Heart left ventricle (tissue), 16 donors: ENCODE measurements at regions of chr5 and their contacts with region 1.

Region 1: DNA sequence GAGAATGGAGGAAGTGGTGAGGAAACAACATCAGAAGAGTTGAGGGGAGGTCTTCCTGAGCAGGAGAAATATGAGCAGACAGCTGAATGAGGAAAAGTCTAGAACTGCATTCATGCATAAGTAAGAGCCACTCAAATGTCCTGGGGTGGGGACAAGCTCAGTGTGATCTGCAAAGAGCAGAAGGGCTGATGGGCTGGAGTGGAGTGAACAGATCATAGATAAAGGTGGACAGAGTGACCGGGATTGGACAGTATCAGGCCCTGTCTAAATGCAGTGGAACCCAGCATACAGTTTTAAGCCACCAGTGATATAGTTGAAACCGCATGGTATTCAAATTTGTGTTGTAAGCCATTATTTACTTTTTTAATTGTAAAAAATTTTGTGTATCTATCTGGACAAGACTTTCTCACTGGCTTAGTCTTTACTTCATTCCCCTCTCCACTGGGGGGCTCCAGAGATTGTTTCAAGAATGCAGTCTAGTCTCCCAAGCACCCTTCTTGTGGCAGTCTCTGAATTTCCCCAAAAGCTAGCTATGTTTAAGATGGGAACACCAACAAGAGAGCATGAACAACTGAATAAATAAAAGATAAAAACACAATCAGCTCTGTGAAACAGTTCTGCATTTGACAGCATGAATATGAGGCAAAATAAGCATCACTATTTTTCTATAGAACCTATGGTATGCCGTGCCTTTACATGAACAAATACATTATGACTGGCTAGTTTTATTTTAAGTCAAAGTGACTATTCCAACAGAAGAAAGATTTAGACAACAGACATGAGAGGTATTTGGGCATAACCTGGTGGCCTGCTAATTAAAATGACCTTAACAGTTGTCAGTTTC is 10.7 kb upstream of the STK32A start:
- DNase-seq: peak in 1 of 5 donors; percentile 30
- ATAC-seq: peak; percentile 51 to 83 (median 70)
- H3K4me3 ChIP-seq: no peak overlapping the region
- H3K27ac ChIP-seq: no peak overlapping the region
- H3K4me1 ChIP-seq: no peaks in the 10 kb centered on the region
- H3K27me3 ChIP-seq: peaks cover 0 to 8% (median 0%) of the 10 kb centered on the region in 9 donors
- CTCF ChIP-seq: peak; percentile 28 to 83 (median 62)
- POLR2A ChIP-seq: no peak

Region 2: DNA sequence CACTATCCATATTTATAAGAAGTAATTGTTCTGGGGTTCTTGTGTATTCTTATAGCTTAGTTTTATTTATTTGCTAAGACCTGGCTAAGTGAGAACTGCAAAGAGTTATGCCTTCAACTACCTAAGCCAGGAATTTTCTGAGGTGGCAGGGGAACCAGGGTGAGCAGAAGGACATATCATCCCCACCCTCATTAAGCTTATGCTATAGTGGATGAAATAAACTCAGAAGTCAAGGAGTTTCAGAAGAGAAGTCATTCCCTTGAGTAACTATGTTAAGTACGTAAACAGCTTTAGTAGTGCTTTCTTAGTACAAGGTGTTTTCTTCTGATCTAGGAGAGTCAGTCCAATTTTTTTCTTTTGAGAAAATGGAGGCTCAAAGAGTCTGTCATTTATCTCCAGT is 52.3 kb after region 1 on chr5:
- intact Hi-C with region 1: no loop called
- DNase-seq: no peak
- ATAC-seq: no peak
- H3K4me3 ChIP-seq: no peak overlapping the region
- H3K27ac ChIP-seq: no peak overlapping the region
- H3K4me1 ChIP-seq: no peaks in the 10 kb centered on the region
- H3K27me3 ChIP-seq: peaks cover 0 to 8% (median 0%) of the 10 kb centered on the region in 9 donors
- CTCF ChIP-seq: no peak
- POLR2A ChIP-seq: no peak

Region 3: DNA sequence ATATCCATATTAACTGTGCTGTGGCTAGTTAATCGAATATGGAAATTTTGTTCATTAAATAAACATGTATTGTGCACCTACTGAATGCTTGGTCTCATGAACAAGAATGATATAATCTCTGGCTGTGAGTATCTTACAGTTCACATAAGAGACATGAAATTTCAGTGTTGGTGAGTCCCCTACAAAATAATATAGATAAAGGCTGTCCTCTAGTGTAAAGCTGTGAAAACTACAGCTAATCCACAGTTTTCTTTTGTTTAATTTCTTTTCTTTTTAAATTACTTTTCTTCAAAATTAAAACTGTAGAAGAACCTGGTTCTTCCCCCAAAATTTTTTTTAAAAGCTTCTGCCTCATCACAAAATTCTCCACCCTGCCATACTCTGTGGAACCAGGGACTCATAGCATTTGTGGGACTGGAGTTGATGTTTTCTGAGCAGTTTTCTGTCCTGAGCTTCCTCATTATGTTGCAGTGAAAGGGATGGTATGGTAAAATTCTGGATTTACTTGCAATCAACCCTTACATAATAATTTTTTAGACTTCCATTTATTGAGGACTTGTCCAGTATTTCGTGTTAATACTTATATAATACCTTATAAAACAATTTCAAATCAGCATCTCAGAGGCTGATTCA is 145.7 kb after region 1 on chr5:
- intact Hi-C with region 1: loop called (anchors 1 to 10 kb)
- DNase-seq: no peak
- ATAC-seq: no peak
- H3K4me3 ChIP-seq: no peak overlapping the region
- H3K27ac ChIP-seq: no peak overlapping the region
- H3K4me1 ChIP-seq: no peaks in the 10 kb centered on the region
- H3K27me3 ChIP-seq: peaks cover 0 to 8% (median 0%) of the 10 kb centered on the region in 9 donors
- CTCF ChIP-seq: peak; percentile 32 to 61 (median 50)
- POLR2A ChIP-seq: no peak

Region 4: DNA sequence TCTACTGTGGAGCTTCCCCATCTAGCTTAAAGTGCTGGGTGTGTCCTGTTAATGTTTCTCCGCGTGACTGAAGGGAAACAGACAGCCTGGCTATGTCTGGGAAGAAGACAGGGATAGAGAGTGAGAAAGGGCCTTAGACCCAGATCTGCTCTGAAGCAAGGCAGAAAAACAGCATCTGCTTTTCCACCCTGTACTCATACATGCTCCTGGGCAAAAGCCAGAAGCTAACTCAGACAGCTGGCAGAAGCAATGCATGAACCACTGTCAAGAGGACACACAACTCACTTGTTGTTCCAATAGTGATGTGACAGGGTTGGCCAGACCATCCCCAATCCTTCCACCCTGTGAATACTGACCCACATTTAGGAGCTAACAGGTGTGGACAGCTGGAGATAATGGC is 222.4 kb after region 1 on chr5:
- intact Hi-C with region 1: loop called in 3 of 10 experiments (anchors 10 kb)
- DNase-seq: peak in 3 of 5 donors; percentile 23 to 60 (median 53)
- ATAC-seq: peak; percentile 78 to 91 (median 90)
- H3K4me3 ChIP-seq: no peak overlapping the region
- H3K27ac ChIP-seq: peak overlapping the region in 10 of 12 donors; percentile 3 to 89 (median 56)
- H3K4me1 ChIP-seq: peaks cover 0 to 63% (median 7%) of the 10 kb centered on the region in 12 donors
- H3K27me3 ChIP-seq: peaks cover 0 to 1% (median 0%) of the 10 kb centered on the region in 9 donors
- CTCF ChIP-seq: no peak
- POLR2A ChIP-seq: no peak

Region 5: DNA sequence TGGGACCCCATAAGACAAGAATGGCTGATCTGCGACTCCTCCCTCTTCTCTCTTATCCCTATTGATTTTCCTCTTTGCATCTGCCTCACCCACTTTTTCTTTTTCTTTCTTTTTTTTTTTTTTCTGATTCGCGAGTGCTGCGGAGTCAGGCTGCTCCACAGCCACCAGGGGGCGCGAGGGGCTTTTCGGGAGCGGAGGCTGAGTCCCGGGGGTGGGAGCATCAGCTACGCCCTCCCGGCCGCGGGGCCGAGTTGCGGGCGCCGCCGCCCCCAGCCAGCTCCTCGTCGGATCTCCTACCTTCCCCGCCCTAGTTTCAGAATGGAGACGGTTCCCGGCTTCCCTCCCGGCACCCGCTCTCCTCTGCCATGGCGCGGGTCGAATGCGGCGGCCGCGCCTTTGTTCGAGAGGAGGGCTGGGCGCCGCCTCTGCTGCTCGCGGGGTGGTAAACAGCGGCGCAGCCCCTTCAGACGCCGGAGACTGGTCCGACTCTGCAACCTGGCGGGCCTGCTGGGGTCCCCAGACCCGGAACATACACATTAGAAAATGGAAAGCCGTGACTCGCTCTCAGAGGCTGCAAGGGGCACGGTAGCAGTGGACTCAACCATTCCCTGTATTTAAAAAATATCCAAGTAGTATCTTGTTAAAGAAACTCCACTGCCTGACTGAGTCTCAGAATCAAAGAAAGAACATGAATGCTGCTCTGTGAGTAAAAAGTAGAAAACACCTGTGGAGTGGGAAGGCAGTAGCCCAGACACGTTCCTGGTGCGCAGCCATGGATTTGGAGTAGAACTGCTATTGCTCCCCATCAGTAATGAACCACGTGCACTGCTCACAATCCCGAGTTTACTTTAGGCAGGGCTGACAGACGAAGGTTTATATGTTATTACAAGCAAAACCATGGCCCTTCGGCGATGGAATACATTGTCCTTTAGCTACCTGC is 230.0 kb after region 1 on chr5:
- intact Hi-C with region 1: loop called in 3 of 10 experiments (anchors 10 kb)
- DNase-seq: peak; percentile 85 to 94 (median 91)
- ATAC-seq: peak; percentile 79 to 89 (median 88)
- H3K4me3 ChIP-seq: peak overlapping the region; percentile 41 to 92 (median 72)
- H3K27ac ChIP-seq: peak overlapping the region; percentile 75 to 95 (median 86)
- H3K4me1 ChIP-seq: peaks cover 0 to 53% (median 18%) of the 10 kb centered on the region in 12 donors
- H3K27me3 ChIP-seq: peaks cover 0 to 9% (median 0%) of the 10 kb centered on the region in 9 donors
- CTCF ChIP-seq: peak; percentile 85 to 96 (median 90)
- POLR2A ChIP-seq: peak in 1 of 2 donors; percentile 33

Region 6: DNA sequence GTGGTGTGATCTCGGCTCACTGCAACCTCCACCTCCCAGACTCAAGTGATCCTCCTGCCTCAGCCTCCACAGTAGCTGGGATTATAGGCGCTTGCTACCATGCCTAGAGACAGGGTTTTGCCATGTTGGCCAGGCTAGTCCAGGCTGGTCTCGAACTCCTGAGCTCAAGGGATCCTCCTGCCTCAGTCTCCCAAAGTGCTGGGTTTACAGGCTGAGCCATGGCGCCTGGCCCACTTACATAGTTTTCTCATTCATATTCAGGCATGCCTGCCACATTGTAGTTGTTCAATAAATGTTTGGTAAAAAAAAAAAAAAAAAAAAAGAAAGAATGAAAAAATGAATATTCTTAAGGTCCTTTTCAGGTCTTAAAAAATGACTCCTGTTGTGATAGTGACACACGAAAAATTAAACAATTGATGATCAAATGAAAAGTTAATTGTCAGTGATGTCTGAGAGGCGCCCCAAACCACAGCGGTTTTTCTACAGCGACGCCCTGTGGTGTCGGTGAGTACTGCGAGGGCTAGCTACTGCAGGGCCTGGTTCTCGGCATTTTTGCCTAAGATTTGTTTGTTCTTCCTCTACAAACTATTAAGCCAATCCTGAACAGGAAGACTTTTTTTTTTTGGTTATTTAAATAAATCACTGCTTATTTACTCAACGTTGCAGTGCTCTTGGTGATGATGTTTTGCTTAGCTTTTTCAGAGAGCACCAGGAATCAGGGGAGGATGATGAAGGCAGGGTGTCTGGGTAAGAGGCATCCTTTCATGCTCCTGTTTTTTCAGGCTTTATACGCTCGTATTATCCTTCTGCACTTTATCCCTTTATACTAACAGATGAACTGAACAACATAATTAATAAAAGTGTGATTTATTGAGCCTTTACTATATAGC is 352.7 kb after region 1 on chr5:
- intact Hi-C with region 1: loop called in 9 of 10 experiments (anchors 1 to 5 kb)
- DNase-seq: peak in 3 of 5 donors; percentile 38 to 44 (median 41)
- ATAC-seq: peak in 3 of 4 donors; percentile 51 to 76 (median 65)
- H3K4me3 ChIP-seq: no peak overlapping the region
- H3K27ac ChIP-seq: no peak overlapping the region
- H3K4me1 ChIP-seq: peaks cover 0 to 7% (median 0%) of the 10 kb centered on the region in 12 donors
- H3K27me3 ChIP-seq: no peaks in the 10 kb centered on the region
- CTCF ChIP-seq: peak; percentile 77 to 89 (median 84)
- POLR2A ChIP-seq: no peak